Activated CD4-positive, alpha-beta T cell treated with anti-CD3 and anti-CD28 coated beads for 36 hours (primary cell): ENCODE measurements at regions of chr11 and their contacts with region 1.

Region 1: DNA sequence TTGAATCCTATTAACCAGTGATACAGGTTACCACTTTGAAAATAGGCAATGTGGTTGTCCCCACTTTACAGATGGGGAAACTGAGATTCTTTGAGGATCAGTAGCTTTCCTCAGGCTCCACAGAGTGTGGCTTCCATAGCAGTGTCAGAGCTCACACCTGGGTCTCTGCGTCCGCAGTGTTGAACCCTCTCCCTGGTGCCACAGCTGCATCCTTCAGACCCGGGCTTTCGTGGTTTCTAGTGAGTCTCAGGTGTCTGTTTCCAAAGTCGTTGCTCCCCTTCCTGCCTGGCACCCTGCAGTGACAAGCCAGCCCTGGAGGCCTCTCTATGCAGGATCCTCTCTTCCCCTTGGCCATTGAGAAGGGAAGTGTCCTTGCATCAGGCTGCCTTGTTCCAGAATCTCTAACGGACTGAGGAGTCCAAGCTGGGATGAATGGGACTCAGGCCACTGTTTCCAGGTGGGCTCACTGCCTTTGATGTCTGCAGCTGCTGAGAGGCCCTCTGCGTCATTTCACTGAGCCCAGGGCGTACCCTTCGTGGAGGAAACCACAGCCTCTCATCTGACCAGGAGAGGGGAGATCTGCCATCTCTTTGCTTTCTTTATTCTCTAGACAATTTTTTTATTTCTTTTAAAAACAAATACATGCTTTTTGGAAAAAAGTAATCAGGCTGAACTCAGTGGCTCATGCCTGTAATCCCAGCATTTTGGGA is 48.4 kb upstream of the MICAL2 start:
- DNase-seq: no peak
- ATAC-seq: no peak
- H3K4me3 Mint-ChIP-seq: no peak overlapping the region
- H3K27ac Mint-ChIP-seq: no peak overlapping the region
- H3K4me1 Mint-ChIP-seq: peaks cover 1% of the 10 kb centered on the region
- H3K27me3 Mint-ChIP-seq: no peaks in the 10 kb centered on the region

Region 2: DNA sequence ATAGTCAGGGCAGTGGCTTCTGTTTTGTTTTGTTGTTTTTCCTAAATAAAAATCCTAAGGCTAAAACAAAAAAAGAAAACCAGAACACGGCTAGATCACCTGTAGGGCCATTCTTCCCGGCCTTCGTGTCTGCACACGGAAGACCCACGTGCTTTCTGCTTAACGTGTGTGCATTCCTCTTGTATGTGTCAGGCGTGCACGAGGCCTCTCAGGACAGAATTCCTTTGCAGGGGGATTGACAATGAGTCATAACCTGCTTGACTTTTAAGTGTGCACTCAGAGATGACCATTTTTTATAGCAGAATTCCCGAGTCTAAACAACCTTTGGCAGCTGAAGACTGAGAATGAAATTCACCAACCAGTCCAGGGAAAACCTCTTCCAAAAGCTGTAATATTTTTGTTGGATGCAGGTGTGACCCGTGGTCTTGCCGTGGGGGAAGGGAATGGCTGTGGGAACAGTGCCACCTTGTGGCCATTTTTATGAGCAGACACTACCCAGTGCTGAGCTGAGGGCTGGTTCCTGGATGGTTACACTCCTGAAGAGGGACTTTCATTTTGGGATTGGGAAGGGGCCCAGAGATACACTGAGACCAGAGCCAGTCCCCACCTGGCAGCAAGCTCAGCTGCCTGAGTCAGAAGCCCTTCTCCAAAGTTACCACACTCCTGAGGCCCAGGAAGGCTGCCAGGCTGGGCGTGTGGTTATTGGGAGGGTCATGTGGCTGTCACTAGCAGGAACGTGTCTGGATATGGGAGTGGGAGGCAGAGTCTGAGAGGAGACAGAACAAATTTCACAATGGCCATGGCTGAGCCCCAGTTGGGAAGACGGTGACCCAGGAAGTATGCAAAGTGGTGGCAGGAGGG is 17.8 kb before region 1 on chr11:
- CTCF ChIA-PET with region 1: interaction called, 10 read pairs
- POLR2A ChIA-PET with region 1: no interaction called
- intact Hi-C with region 1: no loop called
- DNase-seq: peak; percentile 80
- ATAC-seq: peak; percentile 73
- H3K4me3 Mint-ChIP-seq: no peak overlapping the region
- H3K27ac Mint-ChIP-seq: no peak overlapping the region
- H3K4me1 Mint-ChIP-seq: peaks cover 11% of the 10 kb centered on the region
- H3K27me3 Mint-ChIP-seq: peaks cover 4% of the 10 kb centered on the region

Region 3: GRCh38 chr11:12087075-12088004 is 25.3 kb after region 1 on chr11:
- CTCF ChIA-PET with region 1: no interaction called
- POLR2A ChIA-PET with region 1: no interaction called
- intact Hi-C with region 1: loop called in 1 of 2 experiments (anchors 2 kb)
- DNase-seq: peak; percentile 62
- ATAC-seq: peak; percentile 86
- H3K4me3 Mint-ChIP-seq: no peak overlapping the region
- H3K27ac Mint-ChIP-seq: peak overlapping the region; percentile 56
- H3K4me1 Mint-ChIP-seq: peaks cover 59% of the 10 kb centered on the region
- H3K27me3 Mint-ChIP-seq: no peaks in the 10 kb centered on the region

Region 4: GRCh38 chr11:12430955-12431354 is 368.9 kb after region 1 on chr11:
- CTCF ChIA-PET with region 1: no interaction called
- POLR2A ChIA-PET with region 1: no interaction called
- intact Hi-C with region 1: no loop called
- DNase-seq: no peak
- ATAC-seq: no peak
- H3K4me3 Mint-ChIP-seq: no peak overlapping the region
- H3K27ac Mint-ChIP-seq: no peak overlapping the region
- H3K4me1 Mint-ChIP-seq: no peaks in the 10 kb centered on the region
- H3K27me3 Mint-ChIP-seq: no peaks in the 10 kb centered on the region